Caco-2 (cell line): ENCODE measurements at regions of chr2 and their contacts with region 1.

Region 1: DNA sequence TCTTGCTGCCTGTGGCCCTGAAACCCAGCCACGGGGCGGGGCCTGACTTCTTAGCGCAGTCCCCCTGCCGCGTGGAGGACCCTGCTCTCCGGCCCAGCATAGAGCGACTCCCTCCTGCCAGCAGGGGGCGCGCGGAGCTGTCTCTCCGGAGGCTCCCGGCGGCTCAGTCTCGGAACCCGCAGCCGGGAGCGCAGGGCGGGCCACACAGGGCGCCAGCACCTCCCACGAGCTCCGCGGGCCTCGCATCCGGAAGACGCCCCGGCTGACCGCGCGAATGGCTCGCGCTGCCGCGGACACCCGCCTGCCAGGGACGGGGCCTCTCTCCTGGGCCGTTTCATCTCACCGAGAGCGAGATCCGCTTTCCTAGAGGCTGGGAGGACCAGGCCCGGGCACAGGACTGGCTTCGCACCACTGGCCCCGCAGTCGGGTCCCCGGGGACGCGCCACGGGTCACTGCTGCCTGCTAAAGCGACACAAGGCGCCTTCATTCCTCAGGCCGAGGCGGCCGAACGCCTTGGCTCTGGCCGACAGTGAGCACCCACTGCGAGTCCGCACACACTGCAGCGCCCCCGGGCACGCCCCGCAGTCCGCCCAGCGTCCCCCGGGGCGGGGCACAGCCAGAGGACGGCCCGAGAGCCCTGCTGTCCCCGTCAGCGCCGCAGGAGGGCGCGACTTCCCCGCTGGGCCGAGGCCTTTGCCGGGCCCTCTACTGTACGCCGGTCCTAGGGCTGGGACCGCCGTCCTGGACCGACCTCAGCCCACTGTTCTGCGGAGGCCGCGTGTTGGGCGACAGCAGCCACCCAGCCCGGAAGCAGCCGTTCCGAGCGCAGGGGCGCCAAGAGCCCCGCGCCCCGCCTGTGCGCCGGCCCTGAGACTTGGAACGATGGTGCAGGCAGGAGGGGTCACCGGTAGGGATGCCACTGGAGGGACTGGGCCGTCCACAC is 39.0 kb upstream of the ARHGEF4 start:
- DNase-seq: peak; percentile 88 to 95
- H3K4me3 ChIP-seq: peak overlapping the region; percentile 94
- H3K4me3 Mint-ChIP-seq: peak overlapping the region; percentile 67
- H3K27ac Mint-ChIP-seq: no peak overlapping the region
- H3K4me1 ChIP-seq: no peaks in the 10 kb centered on the region
- H3K4me1 Mint-ChIP-seq: no peaks in the 10 kb centered on the region
- H3K27me3 ChIP-seq: no peaks in the 10 kb centered on the region
- H3K27me3 Mint-ChIP-seq: peaks cover 6% of the 10 kb centered on the region
- CTCF ChIP-seq: peak; percentile 78 to 97

Region 2: GRCh38 chr2:130355578-130356431 is 442.0 kb before region 1 on chr2 and contains the start of gene PTPN18:
- CTCF ChIA-PET with region 1: no interaction called
- POLR2A ChIA-PET with region 1: no interaction called
- intact Hi-C with region 1: no loop called
- DNase-seq: peak; percentile 90 to 94
- H3K4me3 ChIP-seq: peak within 1 kb of the TSS; percentile 75
- H3K4me3 Mint-ChIP-seq: peak within 1 kb of the TSS; percentile 90
- H3K27ac Mint-ChIP-seq: peak within 1 kb of the TSS; percentile 86
- H3K4me1 ChIP-seq: peaks cover 5% of the 10 kb centered on the region; the same call in 1 of the 2 replicates
- H3K4me1 Mint-ChIP-seq: peaks cover 10% of the 10 kb centered on the region
- H3K27me3 ChIP-seq: no peaks in the 10 kb centered on the region
- H3K27me3 Mint-ChIP-seq: no peaks in the 10 kb centered on the region
- CTCF ChIP-seq: peak; percentile 47 to 53
- total RNA-seq, gene PTPN18: 46.5 and 51.0 TPM in 2 replicates

Region 3: GRCh38 chr2:130756053-130756873 is 41.5 kb before region 1 on chr2:
- CTCF ChIA-PET with region 1: no interaction called
- POLR2A ChIA-PET with region 1: no interaction called
- intact Hi-C with region 1: no loop called
- DNase-seq: peak in 1 of 2 experiments; percentile 82
- H3K4me3 ChIP-seq: peak overlapping the region; percentile 82
- H3K4me3 Mint-ChIP-seq: peak overlapping the region; percentile 79
- H3K27ac Mint-ChIP-seq: no peak overlapping the region
- H3K4me1 ChIP-seq: no peaks in the 10 kb centered on the region
- H3K4me1 Mint-ChIP-seq: no peaks in the 10 kb centered on the region
- H3K27me3 ChIP-seq: no peaks in the 10 kb centered on the region
- H3K27me3 Mint-ChIP-seq: peaks cover 23% of the 10 kb centered on the region
- CTCF ChIP-seq: peak in 1 of 2 experiments; percentile 12

Region 4: DNA sequence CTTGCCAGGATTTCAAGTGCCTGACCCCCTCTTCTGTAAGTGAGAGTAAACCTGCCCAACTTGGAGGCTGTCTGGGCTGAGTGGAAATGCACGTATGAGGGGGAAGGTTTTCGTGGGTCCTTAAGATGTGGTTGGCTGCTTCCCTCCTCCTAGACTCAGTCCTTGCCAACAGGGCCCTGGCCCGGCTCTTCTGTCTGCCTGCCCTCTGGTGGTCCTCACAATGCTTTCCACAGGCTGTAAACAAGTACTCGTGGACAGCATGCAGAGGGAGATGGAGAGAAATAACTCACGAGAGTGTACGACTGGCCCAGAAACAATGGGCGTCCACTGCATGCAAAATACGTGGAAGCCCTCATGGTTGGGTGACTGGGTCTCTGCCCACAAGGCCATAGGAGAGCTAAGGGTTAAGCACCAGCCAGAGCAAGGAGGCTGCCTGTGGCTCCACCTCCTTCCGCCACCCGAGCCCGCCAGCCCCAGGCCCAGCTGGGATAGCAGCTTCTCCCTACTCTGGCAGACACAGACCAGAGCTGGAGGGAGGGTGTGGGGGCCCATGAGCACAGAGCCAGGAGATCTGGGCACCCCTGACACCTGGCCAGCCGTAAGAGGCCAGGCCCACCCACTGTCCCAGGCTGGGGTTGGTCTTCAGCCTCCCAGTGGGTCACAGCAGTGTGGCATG is 22.0 kb after region 1 on chr2:
- CTCF ChIA-PET with region 1: no interaction called
- POLR2A ChIA-PET with region 1: no interaction called
- intact Hi-C with region 1: no loop called
- DNase-seq: no peak
- H3K4me3 ChIP-seq: no peak overlapping the region
- H3K4me3 Mint-ChIP-seq: no peak overlapping the region
- H3K27ac Mint-ChIP-seq: no peak overlapping the region
- H3K4me1 ChIP-seq: no peaks in the 10 kb centered on the region
- H3K4me1 Mint-ChIP-seq: no peaks in the 10 kb centered on the region
- H3K27me3 ChIP-seq: no peaks in the 10 kb centered on the region
- H3K27me3 Mint-ChIP-seq: no peaks in the 10 kb centered on the region
- CTCF ChIP-seq: peak in 1 of 2 experiments; percentile 4

Region 5: GRCh38 chr2:130873700-130874346 is 76.1 kb after region 1 on chr2:
- CTCF ChIA-PET with region 1: interaction called, 34 read pairs
- POLR2A ChIA-PET with region 1: no interaction called
- intact Hi-C with region 1: loop called (anchors 1 kb)
- DNase-seq: peak; percentile 71 to 81
- H3K4me3 ChIP-seq: no peak overlapping the region
- H3K4me3 Mint-ChIP-seq: no peak overlapping the region
- H3K27ac Mint-ChIP-seq: no peak overlapping the region
- H3K4me1 ChIP-seq: no peaks in the 10 kb centered on the region
- H3K4me1 Mint-ChIP-seq: no peaks in the 10 kb centered on the region
- H3K27me3 ChIP-seq: no peaks in the 10 kb centered on the region; the same call in 1 of the 2 replicates
- H3K27me3 Mint-ChIP-seq: peaks cover 13% of the 10 kb centered on the region
- CTCF ChIP-seq: peak; percentile 62 to 80

Region 6: DNA sequence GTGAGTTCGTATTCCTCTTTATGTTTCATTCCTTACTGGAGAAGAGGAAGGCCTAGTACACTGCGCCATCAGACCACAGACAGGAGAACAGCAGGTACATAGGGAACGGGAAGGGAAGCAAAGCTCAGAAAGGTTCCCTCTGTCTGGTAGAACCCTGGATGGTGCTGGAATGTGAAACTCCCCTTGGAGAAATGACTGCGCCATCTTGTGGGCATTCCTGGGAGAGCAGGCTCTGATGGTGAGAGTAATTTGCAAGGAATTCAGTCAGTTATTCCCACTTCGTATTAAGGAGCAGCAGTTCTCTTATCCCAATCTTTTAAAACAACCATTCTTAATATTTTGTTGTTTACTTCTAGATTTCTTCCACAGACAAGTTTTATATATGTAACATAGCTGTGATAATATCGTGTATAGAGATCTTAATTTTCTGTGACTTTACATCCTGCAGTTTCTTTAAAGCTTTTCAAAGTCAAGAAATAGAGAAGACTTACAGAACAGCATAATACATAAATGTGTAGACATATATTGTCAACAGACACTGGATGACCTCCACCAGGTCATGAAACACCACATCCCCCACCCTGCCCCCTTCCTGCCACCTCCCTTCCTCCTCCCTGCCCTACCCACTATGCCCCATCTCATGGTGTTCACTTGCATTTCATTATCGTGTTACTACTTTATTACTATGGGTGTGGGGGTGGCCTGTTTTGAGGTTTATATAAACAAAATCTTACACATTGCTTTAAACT is 122.8 kb after region 1 on chr2:
- CTCF ChIA-PET with region 1: interaction called, 12 read pairs
- POLR2A ChIA-PET with region 1: no interaction called
- intact Hi-C with region 1: loop called (anchors 5 kb)
- DNase-seq: peak; percentile 71 to 82
- H3K4me3 ChIP-seq: no peak overlapping the region
- H3K4me3 Mint-ChIP-seq: no peak overlapping the region
- H3K27ac Mint-ChIP-seq: no peak overlapping the region
- H3K4me1 ChIP-seq: no peaks in the 10 kb centered on the region
- H3K4me1 Mint-ChIP-seq: no peaks in the 10 kb centered on the region
- H3K27me3 ChIP-seq: no peaks in the 10 kb centered on the region
- H3K27me3 Mint-ChIP-seq: no peaks in the 10 kb centered on the region
- CTCF ChIP-seq: peak; percentile 82 to 88

Region 7: GRCh38 chr2:131121464-131121863 is 323.7 kb after region 1 on chr2:
- CTCF ChIA-PET with region 1: no interaction called
- POLR2A ChIA-PET with region 1: no interaction called
- intact Hi-C with region 1: no loop called
- DNase-seq: no peak
- H3K4me3 ChIP-seq: no peak overlapping the region
- H3K4me3 Mint-ChIP-seq: no peak overlapping the region
- H3K27ac Mint-ChIP-seq: no peak overlapping the region
- H3K4me1 ChIP-seq: peaks cover 13% of the 10 kb centered on the region
- H3K4me1 Mint-ChIP-seq: peaks cover 7% of the 10 kb centered on the region
- H3K27me3 ChIP-seq: no peaks in the 10 kb centered on the region
- H3K27me3 Mint-ChIP-seq: no peaks in the 10 kb centered on the region
- CTCF ChIP-seq: no peak